Activated naive CD4-positive, alpha-beta T cell treated with anti-CD3 and anti-CD28 coated beads for 36 hours (primary cell): ENCODE measurements at regions of chr4 and their contacts with region 1.

Region 1: DNA sequence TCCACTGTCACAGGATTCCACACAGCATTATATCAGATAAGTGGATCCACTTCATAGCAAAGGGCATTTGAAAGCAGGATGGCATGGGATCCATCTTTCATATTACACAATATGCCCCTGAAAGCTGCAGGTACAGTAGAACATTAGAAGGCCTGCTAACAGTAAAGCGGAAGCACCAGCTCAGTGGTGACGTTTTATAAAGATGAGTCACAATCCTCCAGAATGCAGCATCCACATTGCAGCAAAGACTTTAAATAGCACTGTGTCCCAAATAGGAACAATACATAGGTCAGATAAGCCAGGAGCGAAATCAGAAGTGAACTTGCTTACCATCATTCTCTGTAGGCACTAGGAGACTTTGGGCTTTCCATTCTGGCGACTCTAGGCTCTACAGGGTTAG is 609.5 kb upstream of the FAT1 start:
- DNase-seq: no peak
- H3K4me3 Mint-ChIP-seq: no peak overlapping the region
- H3K27ac Mint-ChIP-seq: no peak overlapping the region
- H3K4me1 Mint-ChIP-seq: no peaks in the 10 kb centered on the region
- H3K27me3 Mint-ChIP-seq: no peaks in the 10 kb centered on the region

Region 2: DNA sequence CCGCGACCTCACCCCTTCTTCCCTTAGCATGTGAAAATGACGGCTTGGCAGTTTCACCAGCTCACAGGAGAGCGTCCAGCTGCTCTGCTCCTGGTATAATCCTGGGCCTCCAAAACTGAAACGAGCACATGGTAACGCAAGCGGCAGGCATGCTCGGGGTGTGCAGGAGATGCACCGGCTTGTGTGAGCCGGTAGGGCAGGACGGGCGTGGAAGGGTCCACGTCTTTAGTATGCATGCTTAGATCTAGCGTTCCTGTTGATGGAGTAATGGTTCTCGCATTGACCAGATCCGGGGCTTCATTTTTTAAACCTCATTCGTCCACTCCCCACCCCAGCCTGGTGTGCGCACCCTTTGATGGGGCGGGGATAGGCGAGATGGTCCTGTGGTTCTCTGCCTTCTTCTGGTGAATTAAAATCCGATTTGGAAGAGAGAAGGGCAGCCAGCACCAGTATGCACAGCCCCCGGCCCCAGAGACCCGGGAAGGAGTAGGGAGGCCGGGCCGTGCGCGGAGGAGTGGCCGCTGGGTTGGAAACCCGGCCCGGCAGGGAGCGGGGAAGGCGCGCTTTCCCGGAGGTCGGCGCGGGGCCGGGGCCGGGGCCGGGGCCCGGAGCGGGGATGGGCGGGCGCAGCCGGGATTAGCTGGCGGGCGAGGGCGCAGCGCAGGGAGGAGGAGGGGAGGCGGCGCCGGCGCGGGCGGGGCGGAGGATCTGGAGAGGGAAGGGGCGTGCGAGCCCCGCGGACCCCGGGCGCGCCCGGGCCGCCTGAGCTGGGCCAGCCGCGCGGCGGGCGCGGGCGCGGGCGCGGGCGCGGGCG is 1188.8 kb before region 1 on chr4:
- CTCF ChIA-PET with region 1: no interaction called
- intact Hi-C with region 1: no loop called
- DNase-seq: peak; percentile 22
- H3K4me3 Mint-ChIP-seq: peak overlapping the region; percentile 65
- H3K27ac Mint-ChIP-seq: no peak overlapping the region
- H3K4me1 Mint-ChIP-seq: peaks cover 2% of the 10 kb centered on the region
- H3K27me3 Mint-ChIP-seq: peaks cover 37% of the 10 kb centered on the region

Region 3: GRCh38 chr4:187357821-187358220 is 24.7 kb after region 1 on chr4:
- CTCF ChIA-PET with region 1: no interaction called
- intact Hi-C with region 1: loop called (anchors 1 kb)
- DNase-seq: no peak
- H3K4me3 Mint-ChIP-seq: no peak overlapping the region
- H3K27ac Mint-ChIP-seq: no peak overlapping the region
- H3K4me1 Mint-ChIP-seq: no peaks in the 10 kb centered on the region
- H3K27me3 Mint-ChIP-seq: no peaks in the 10 kb centered on the region